CD8-positive, alpha-beta memory T cell (primary cell): ENCODE measurements at regions of chr17 and their contacts with region 1.

Region 1: DNA sequence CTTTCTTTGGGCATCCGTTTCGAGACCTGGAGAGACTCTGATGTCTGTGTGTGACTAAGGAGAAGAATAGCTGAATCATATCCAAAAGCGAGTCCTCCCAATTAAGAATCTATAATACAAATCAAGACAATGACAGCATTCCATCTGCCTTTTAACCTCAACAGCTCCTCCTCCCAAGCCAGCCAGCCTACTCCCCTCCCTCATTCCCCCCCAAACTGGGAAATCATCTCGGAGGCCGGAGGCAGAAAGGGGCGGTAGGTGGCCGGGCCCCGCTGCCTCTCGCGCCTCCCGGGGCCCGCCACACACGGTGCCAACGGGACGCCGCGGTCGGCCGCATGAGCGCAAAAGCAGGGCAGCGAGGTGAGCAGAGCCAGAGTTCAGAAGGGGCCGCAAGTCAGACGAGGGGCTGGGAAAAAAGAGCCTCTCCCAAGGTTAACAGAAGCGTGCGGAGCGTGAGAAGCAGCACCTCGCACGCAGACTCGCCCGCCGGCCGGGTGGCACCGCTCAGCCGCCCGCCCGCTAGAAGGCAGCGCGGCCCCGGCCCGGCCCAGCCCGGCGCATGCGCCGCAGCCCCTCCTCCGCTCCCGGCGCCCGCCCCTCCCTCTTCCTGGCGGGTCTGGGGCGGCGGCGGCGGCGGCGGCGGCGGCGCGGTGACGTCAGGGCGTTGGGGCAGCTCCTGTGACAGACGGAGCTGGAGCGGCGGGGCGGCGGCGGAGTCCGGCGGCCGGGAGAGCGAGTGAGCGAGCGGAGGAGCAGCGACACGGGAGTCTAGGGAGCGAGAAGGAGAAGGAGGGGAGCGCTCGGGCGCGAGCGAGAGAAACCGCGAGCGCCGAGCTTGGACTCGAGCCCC is at the start of gene PAFAH1B1:
- DNase-seq: peak; percentile 87 to 97 (median 96)
- H3K4me3 ChIP-seq: peak within 1 kb of the TSS; percentile 84
- H3K4me3 Mint-ChIP-seq: peak within 1 kb of the TSS; percentile 87 to 97 (median 93)
- H3K27ac ChIP-seq: peak within 1 kb of the TSS; percentile 90
- H3K27ac Mint-ChIP-seq: peak within 1 kb of the TSS; percentile 91 to 99 (median 96)
- H3K4me1 ChIP-seq: peaks cover 35% of the 10 kb centered on the region
- H3K4me1 Mint-ChIP-seq: peaks cover 31 to 38% (median 36%) of the 10 kb centered on the region in 3 donors
- H3K27me3 ChIP-seq: no peaks in the 10 kb centered on the region
- H3K27me3 Mint-ChIP-seq: no peaks in the 10 kb centered on the region
- total RNA-seq, gene PAFAH1B1: 159 to 168 TPM

Region 2: DNA sequence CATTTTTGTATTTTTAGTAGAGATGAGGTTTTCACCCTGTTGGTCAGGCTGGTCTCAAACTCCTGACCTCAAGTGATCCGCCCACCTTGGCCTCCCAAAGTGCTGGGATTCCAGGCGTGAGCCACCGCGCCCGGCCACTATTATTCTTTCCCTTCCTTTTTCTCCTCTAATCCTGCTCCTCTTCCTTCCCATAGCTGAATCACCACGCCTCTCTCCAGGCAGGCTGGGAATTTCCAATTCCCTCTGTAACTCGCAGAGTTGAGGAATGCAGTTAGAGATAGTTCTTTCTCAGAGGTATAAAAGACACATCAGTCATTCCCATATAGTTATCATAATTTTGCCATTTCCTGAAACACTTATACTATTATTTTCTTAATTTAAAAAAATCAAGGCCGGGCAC is 92.8 kb before region 1 on chr17:
- CTCF ChIA-PET with region 1: no interaction called
- POLR2A ChIA-PET with region 1: interaction called, 12 read pairs
- DNase-seq: no peak
- H3K4me3 ChIP-seq: no peak overlapping the region
- H3K4me3 Mint-ChIP-seq: no peak overlapping the region
- H3K27ac ChIP-seq: no peak overlapping the region
- H3K27ac Mint-ChIP-seq: no peak overlapping the region
- H3K4me1 ChIP-seq: no peaks in the 10 kb centered on the region
- H3K4me1 Mint-ChIP-seq: peaks cover 18 to 36% (median 36%) of the 10 kb centered on the region in 3 donors
- H3K27me3 ChIP-seq: no peaks in the 10 kb centered on the region
- H3K27me3 Mint-ChIP-seq: no peaks in the 10 kb centered on the region

Region 3: GRCh38 chr17:2511462-2512369 is 81.5 kb before region 1 on chr17 and contains the start of gene METTL16:
- CTCF ChIA-PET with region 1: interaction called, 4 read pairs
- POLR2A ChIA-PET with region 1: interaction called, 10 read pairs
- DNase-seq: peak; percentile 94 to 98 (median 96)
- H3K4me3 ChIP-seq: peak within 1 kb of the TSS; percentile 96
- H3K4me3 Mint-ChIP-seq: peak within 1 kb of the TSS in 1 of 7 donors; percentile 33
- H3K27ac ChIP-seq: peak within 1 kb of the TSS; percentile 96
- H3K27ac Mint-ChIP-seq: peak within 1 kb of the TSS in 4 of 8 donors; percentile 10 to 77 (median 17)
- H3K4me1 ChIP-seq: peaks cover 26% of the 10 kb centered on the region
- H3K4me1 Mint-ChIP-seq: peaks cover 16 to 21% (median 18%) of the 10 kb centered on the region in 3 donors
- H3K27me3 ChIP-seq: no peaks in the 10 kb centered on the region
- H3K27me3 Mint-ChIP-seq: no peaks in the 10 kb centered on the region
- total RNA-seq, gene METTL16: 67.2 to 72.0 TPM

Region 4: GRCh38 chr17:2532146-2532720 is 61.0 kb before region 1 on chr17:
- CTCF ChIA-PET with region 1: no interaction called
- POLR2A ChIA-PET with region 1: no interaction called
- DNase-seq: no peak
- H3K4me3 ChIP-seq: no peak overlapping the region
- H3K4me3 Mint-ChIP-seq: no peak overlapping the region
- H3K27ac ChIP-seq: no peak overlapping the region
- H3K27ac Mint-ChIP-seq: no peak overlapping the region
- H3K4me1 ChIP-seq: peaks cover 8% of the 10 kb centered on the region
- H3K4me1 Mint-ChIP-seq: peaks cover 10 to 13% (median 10%) of the 10 kb centered on the region in 3 donors
- H3K27me3 ChIP-seq: no peaks in the 10 kb centered on the region
- H3K27me3 Mint-ChIP-seq: no peaks in the 10 kb centered on the region